ENCODE measurements at regions of chr9 and their contacts with region 1.

Region 1: DNA sequence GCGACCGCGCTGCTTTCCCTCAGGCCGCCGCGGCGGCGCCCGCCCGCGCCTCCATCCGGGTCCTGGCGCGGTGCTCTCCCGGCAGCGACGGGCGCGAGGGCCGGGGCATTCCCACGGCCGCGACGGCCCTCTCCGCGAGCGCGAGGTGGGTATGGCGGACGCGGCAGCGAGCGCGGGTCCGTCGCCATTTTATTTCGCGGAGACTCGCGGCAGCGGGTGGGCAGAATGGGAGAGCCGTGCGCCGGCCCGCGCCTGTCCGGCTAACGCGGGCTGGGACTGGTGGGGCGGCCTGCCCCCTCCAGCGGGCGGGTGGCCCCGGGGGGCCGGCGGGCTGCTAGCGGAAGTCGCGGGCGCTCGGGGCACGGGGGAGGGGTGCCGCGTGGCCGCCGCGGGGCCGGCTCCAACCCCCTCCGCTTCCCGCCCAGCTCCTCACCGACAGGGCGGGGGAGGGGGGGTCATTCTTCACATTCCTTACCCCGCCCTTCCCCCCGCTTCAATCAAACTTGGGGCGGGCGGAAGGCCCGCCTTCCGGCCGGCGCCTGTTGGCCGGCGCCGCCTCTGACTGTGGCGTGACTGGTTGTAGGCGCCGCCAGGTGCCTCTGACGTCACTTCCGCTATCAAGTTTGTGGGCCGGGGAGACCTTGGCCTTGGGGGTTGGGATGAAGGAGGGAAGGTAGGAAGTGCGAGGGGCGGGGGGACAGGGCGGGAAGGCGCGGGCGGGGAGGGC is 82.1 kb downstream of the PTPDC1 start:
- DNase-seq: peak; percentile 85
- ATAC-seq: peak; percentile 63
- H3K4me3 Mint-ChIP-seq: peak overlapping the region; percentile 89
- H3K27ac Mint-ChIP-seq: peak overlapping the region; percentile 87
- H3K4me1 Mint-ChIP-seq: peaks cover 49% of the 10 kb centered on the region
- H3K27me3 Mint-ChIP-seq: no peaks in the 10 kb centered on the region
- CTCF ChIP-seq: no peak

Region 2: DNA sequence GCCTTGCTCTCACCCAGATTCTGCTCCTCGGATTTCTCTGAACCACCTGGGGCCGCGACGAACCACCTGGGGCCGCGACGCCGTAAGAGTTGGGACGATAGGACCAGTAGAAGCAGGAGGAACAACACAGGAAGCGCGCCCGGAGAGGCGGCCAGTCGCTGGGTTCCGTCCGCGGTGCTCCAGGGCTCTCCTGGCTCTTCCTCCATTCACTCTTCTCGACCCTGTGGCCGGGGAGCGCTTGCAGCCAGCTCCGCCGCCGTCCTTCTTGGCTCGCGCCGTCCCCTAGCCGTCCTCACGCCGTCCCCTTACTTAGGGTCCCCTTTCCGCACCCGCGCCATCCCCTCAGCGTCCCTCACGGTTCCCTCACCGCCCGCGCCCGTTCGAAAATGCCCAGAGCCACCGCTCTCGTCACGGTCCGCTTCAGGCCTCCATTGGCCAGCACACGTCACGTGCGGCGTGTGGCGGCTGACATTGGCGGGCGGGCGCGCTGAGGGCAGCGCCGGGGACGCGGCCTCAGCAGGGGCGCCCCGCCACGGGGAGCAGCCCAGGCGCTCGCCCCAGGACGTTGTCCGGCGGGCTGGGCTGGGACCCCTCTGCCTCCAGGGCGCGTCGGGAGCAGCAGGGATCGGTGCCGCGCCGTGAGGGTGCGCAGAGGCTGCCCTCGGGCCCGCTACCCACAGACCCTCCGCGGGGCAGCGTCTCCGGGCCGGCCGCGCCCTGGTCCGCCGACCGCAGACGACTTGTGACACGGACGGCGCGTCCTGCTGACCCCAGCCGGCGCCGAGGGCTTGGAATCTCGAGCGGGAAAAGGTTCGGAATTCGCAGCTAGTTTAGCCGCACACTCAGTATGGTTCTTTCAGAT is 135.9 kb before region 1 on chr9:
- CTCF ChIA-PET with region 1: no interaction called
- POLR2A ChIA-PET with region 1: interaction called, 7 read pairs
- intact Hi-C with region 1: loop called (anchors 1 kb)
- DNase-seq: peak; percentile 74
- ATAC-seq: peak; percentile 98
- H3K4me3 Mint-ChIP-seq: peak overlapping the region; percentile 91
- H3K27ac Mint-ChIP-seq: peak overlapping the region; percentile 91
- H3K4me1 Mint-ChIP-seq: peaks cover 19% of the 10 kb centered on the region
- H3K27me3 Mint-ChIP-seq: no peaks in the 10 kb centered on the region
- CTCF ChIP-seq: no peak

Region 3: DNA sequence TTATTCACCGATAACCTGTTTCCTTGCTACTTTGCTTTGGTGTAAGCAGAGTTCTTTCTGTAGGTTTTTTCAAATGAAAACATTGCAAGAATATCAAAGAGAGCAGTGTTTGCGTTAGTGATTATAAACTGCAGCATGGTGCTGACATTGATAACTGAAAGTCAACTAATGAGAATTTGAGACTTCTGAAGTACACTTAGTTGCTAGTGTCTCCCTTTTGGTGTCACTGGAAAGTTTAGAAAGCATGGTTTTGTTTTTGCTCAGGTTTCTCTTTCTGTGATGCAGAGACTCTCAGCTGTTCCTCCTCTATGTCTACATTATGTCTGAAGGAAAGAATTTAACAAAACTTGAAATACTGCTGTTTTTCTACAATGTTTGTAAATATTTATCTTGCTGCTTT is 12.5 kb after region 1 on chr9:
- CTCF ChIA-PET with region 1: no interaction called
- POLR2A ChIA-PET with region 1: interaction called, 3 read pairs
- intact Hi-C with region 1: loop called (anchors 1 kb)
- DNase-seq: no peak
- ATAC-seq: no peak
- H3K4me3 Mint-ChIP-seq: no peak overlapping the region
- H3K27ac Mint-ChIP-seq: no peak overlapping the region
- H3K4me1 Mint-ChIP-seq: peaks cover 69% of the 10 kb centered on the region
- H3K27me3 Mint-ChIP-seq: no peaks in the 10 kb centered on the region
- CTCF ChIP-seq: no peak

Region 4: DNA sequence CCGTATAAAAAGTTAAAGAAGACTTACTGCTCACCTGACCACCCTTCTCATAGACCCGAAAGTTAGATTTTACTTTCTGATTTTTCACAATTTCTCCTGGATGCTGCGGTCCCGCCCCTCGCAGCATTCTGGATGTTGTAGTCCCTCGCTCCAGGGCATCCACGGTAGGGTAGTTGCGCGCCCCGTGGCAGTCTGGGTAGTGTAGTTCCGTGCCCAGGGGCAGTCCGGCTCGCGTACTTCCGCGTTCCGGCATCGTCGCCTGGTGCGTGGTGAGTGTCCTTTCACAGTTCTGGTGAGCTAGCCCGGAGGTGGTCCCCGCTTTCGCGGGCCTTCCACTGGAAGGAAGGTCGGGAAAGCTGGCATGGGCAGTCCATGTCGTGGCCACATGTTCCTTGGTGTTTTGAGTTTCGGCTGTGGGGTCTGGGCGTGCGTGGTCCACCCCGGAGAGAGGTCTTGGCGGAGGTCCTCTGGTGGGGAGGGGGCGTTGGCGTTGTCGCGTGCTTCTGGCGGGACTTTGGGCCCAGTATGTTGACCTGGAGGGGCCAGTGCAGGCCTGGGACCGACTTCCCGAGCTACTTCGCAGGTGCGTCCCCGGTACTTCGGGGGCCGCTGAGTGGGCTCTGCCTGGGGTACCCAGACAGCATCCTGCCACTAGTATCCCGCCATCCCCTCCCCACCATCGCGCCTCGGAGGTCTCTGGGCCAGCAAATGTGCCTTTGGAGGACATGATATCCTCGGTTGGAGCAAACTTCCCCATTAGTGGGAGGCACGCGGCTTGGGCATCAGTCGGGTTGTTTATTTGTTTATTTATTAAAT is 92.9 kb after region 1 on chr9 and contains the start of gene ZNF169:
- CTCF ChIA-PET with region 1: no interaction called
- POLR2A ChIA-PET with region 1: no interaction called
- intact Hi-C with region 1: loop called (anchors 1 kb)
- DNase-seq: peak; percentile 78
- ATAC-seq: peak; percentile 100
- H3K4me3 Mint-ChIP-seq: peak within 1 kb of the TSS; percentile 100
- H3K27ac Mint-ChIP-seq: peak within 1 kb of the TSS; percentile 95
- H3K4me1 Mint-ChIP-seq: peaks cover 36% of the 10 kb centered on the region
- H3K27me3 Mint-ChIP-seq: peaks cover 9% of the 10 kb centered on the region
- CTCF ChIP-seq: no peak
- total RNA-seq, gene ZNF169: 13.6 and 18.3 TPM in 2 replicates

Region 5: GRCh38 chr9:94656200-94656599 is 489.8 kb after region 1 on chr9:
- CTCF ChIA-PET with region 1: no interaction called
- POLR2A ChIA-PET with region 1: no interaction called
- intact Hi-C with region 1: loop called (anchors 10 kb)
- DNase-seq: peak; percentile 36
- ATAC-seq: peak; percentile 100
- H3K4me3 Mint-ChIP-seq: peak overlapping the region; percentile 80
- H3K27ac Mint-ChIP-seq: peak overlapping the region; percentile 90
- H3K4me1 Mint-ChIP-seq: peaks cover 18% of the 10 kb centered on the region
- H3K27me3 Mint-ChIP-seq: no peaks in the 10 kb centered on the region
- CTCF ChIP-seq: no peak